ENCODE measurements at regions of chr9 and their contacts with region 1.

Region 1: GRCh38 chr9:35116898-35117551 is 1.4 kb upstream of the ATOSB start:
- DNase-seq: peak; percentile 91
- ATAC-seq: peak; percentile 51
- H3K4me3 Mint-ChIP-seq: peak overlapping the region; percentile 75
- H3K27ac Mint-ChIP-seq: peak overlapping the region; percentile 86
- H3K4me1 Mint-ChIP-seq: peaks cover 35% of the 10 kb centered on the region
- H3K27me3 Mint-ChIP-seq: no peaks in the 10 kb centered on the region
- CTCF ChIP-seq: peak; percentile 83

Region 2: GRCh38 chr9:34744295-34745221 is 372.5 kb before region 1 on chr9:
- CTCF ChIA-PET with region 1: no interaction called
- POLR2A ChIA-PET with region 1: no interaction called
- intact Hi-C with region 1: no loop called
- DNase-seq: no peak
- ATAC-seq: no peak
- H3K4me3 Mint-ChIP-seq: no peak overlapping the region
- H3K27ac Mint-ChIP-seq: no peak overlapping the region
- H3K4me1 Mint-ChIP-seq: no peaks in the 10 kb centered on the region
- H3K27me3 Mint-ChIP-seq: peaks cover 20% of the 10 kb centered on the region
- CTCF ChIP-seq: no peak

Region 3: DNA sequence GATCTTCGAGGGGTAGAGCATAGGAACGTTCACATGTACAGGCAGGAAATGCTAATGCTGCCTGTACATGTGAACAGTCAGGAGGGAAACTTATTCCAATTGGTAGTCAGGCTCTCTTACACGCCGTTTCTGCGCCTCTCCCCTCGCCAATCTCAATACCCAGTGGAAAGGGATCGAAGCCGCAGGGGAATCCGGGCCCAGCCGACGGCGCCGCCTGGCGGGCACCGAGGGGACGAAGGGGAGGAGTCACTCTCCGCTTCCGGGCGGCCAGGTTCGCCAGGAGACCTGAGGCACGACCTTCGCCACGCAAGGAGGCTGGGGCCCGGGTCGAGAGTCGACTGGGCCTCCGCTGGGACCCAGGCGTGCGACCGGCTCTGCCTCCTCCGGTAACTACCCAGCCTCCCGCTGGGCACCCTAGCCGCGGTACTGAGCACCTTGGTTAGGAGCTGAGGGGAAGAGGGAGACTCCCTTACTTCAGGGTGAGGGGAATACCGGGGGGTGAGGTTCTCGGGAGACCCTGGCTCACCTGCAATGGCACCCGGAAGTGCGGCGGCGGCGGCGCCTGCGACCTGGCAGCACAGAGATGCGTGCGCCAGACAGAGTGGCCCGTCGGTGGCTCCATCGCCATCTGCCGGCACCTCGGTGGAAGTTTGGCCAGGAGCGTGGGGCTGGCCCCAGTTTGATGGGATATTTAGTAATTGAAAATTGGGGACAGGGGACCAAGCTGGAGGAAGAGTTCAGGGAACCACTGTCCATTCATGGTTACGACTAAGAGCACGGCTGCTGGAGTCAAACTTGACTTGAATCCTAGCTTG is 20.8 kb before region 1 on chr9 and contains the start of gene PIGO:
- CTCF ChIA-PET with region 1: interaction called, 22 read pairs
- POLR2A ChIA-PET with region 1: interaction called, 6 read pairs
- intact Hi-C with region 1: no loop called
- DNase-seq: peak; percentile 93
- ATAC-seq: peak; percentile 92
- H3K4me3 Mint-ChIP-seq: peak within 1 kb of the TSS; percentile 85
- H3K27ac Mint-ChIP-seq: peak within 1 kb of the TSS; percentile 93
- H3K4me1 Mint-ChIP-seq: peaks cover 23% of the 10 kb centered on the region
- H3K27me3 Mint-ChIP-seq: no peaks in the 10 kb centered on the region
- CTCF ChIP-seq: peak; percentile 95
- total RNA-seq, gene PIGO: 19.8 to 21.9 TPM

Region 4: DNA sequence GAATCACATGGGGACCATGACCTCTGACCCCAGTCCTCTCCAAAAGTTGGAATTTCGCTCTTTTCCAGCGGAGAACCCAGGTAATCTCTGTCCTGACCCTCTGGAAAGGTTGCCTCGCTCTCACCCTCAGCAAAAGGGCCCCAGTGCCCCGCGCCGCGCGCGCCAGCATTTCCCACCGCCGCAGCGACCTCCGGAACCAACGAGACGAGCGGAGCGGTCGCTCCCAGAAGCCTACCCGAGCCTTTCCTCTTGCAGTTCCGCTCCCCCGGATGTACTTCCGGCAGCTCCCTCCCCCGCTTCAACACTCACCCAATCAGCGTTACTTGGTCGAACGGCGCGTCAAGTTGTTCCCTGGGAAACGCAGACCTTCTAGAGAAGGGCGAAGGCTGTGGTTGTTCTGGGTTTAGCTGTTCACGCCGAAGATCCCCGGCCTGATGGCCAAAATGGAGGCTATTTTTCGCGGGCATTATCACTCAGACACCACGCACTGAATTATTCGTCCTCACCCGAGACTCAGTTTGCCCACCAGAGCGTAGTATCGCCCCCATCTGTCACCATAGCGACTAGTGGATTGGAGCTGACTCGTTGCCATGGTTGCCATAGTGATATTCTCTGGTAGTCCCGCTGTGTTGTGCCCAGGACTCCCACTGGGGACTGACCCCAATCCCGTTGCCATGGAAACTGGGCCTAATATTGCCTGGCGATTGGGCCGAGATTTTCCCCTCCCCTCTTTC is 13.9 kb before region 1 on chr9 and contains the start of gene STOML2:
- CTCF ChIA-PET with region 1: interaction called, 22 read pairs
- POLR2A ChIA-PET with region 1: interaction called, 32 read pairs
- intact Hi-C with region 1: no loop called
- DNase-seq: peak; percentile 96
- ATAC-seq: peak; percentile 98
- H3K4me3 Mint-ChIP-seq: peak within 1 kb of the TSS; percentile 98
- H3K27ac Mint-ChIP-seq: peak within 1 kb of the TSS; percentile 97
- H3K4me1 Mint-ChIP-seq: peaks cover 22% of the 10 kb centered on the region
- H3K27me3 Mint-ChIP-seq: no peaks in the 10 kb centered on the region
- CTCF ChIP-seq: no peak
- total RNA-seq, gene STOML2: 208 to 211 TPM

Region 5: GRCh38 chr9:35258676-35259474 is 141.8 kb after region 1 on chr9:
- CTCF ChIA-PET with region 1: interaction called, 42 read pairs
- POLR2A ChIA-PET with region 1: interaction called, 4 read pairs
- intact Hi-C with region 1: loop called (anchors 5 kb)
- DNase-seq: peak; percentile 67
- ATAC-seq: peak; percentile 45
- H3K4me3 Mint-ChIP-seq: no peak overlapping the region
- H3K27ac Mint-ChIP-seq: no peak overlapping the region
- H3K4me1 Mint-ChIP-seq: no peaks in the 10 kb centered on the region
- H3K27me3 Mint-ChIP-seq: peaks cover under 1% of the 10 kb centered on the region
- CTCF ChIP-seq: peak; percentile 63

Region 6: GRCh38 chr9:35481347-35481975 is 364.4 kb after region 1 on chr9:
- CTCF ChIA-PET with region 1: interaction called, 18 read pairs
- POLR2A ChIA-PET with region 1: no interaction called
- intact Hi-C with region 1: loop called (anchors 5 kb)
- DNase-seq: peak; percentile 58
- ATAC-seq: peak; percentile 65
- H3K4me3 Mint-ChIP-seq: no peak overlapping the region
- H3K27ac Mint-ChIP-seq: no peak overlapping the region
- H3K4me1 Mint-ChIP-seq: no peaks in the 10 kb centered on the region
- H3K27me3 Mint-ChIP-seq: peaks cover 5% of the 10 kb centered on the region
- CTCF ChIP-seq: peak; percentile 66

Region 7: GRCh38 chr9:36317764-36318163 is 1200.7 kb after region 1 on chr9:
- CTCF ChIA-PET with region 1: no interaction called
- POLR2A ChIA-PET with region 1: no interaction called
- intact Hi-C with region 1: no loop called
- DNase-seq: no peak
- ATAC-seq: no peak
- H3K4me3 Mint-ChIP-seq: no peak overlapping the region
- H3K27ac Mint-ChIP-seq: no peak overlapping the region
- H3K4me1 Mint-ChIP-seq: no peaks in the 10 kb centered on the region
- H3K27me3 Mint-ChIP-seq: peaks cover 5% of the 10 kb centered on the region
- CTCF ChIP-seq: no peak

Measured in activated CD8-positive, alpha-beta T cell treated with anti-CD3 and anti-CD28 coated beads for 36 hours (primary cell).